ENCODE measurements at regions of chr4 and their contacts with region 1.

Region 1: GRCh38 chr4:118968005-118968404 is 79.4 kb downstream of the SYNPO2 start:
- DNase-seq: peak; percentile 75
- H3K4me3 ChIP-seq: peak overlapping the region; percentile 29; the same call in 1 of the 2 replicates
- H3K27ac ChIP-seq: peak overlapping the region; percentile 52
- H3K4me1 ChIP-seq: peaks cover 30% of the 10 kb centered on the region
- H3K27me3 ChIP-seq: no peaks in the 10 kb centered on the region

Region 2: GRCh38 chr4:117941611-117942010 is 1026.4 kb before region 1 on chr4:
- in situ Hi-C with region 1: no loop called
- DNase-seq: no peak
- H3K4me3 ChIP-seq: no peak overlapping the region
- H3K27ac ChIP-seq: no peak overlapping the region
- H3K4me1 ChIP-seq: no peaks in the 10 kb centered on the region
- H3K27me3 ChIP-seq: no peaks in the 10 kb centered on the region

Region 3: DNA sequence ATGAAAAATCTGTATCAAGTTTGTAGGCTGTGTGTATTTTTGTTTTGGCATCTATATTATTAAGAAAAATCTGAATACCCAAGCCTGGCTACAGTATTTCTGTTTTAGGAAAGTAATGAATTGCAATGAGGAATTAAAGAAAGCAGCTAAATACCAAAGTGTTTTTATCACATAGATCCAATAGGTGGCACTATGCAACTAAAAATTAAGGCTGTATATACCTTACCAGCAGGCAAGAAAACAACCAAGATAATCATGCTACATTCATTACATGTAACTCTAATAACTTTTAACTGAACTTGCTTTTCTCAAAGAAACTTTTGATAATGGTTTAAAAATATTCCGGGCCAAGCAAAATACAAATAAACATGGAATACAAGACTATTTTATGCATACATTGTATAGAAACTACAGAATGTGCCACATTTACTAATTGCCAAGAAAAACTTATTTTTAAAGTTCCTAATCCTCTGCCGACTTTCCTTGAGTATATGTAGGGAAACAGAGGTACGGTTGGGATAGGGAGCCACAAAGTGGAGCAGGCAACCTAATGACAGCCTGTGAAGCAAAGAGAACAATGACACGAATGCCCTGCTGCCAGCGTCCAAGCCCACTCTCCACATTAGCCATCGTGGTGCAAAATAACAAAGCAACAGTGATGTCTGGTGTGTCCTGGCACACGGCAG is 195.8 kb before region 1 on chr4:
- in situ Hi-C with region 1: loop called (anchors 25 kb)
- DNase-seq: peak; percentile 72
- H3K4me3 ChIP-seq: peak overlapping the region; percentile 17; the same call in 1 of the 2 replicates
- H3K27ac ChIP-seq: peak overlapping the region; percentile 56
- H3K4me1 ChIP-seq: peaks cover 51% of the 10 kb centered on the region
- H3K27me3 ChIP-seq: no peaks in the 10 kb centered on the region

Region 4: GRCh38 chr4:119299741-119300100 is 331.7 kb after region 1 on chr4:
- in situ Hi-C with region 1: no loop called
- DNase-seq: no peak
- H3K4me3 ChIP-seq: peak overlapping the region; percentile 82
- H3K27ac ChIP-seq: peak overlapping the region; percentile 83
- H3K4me1 ChIP-seq: peaks cover 15% of the 10 kb centered on the region; the same call in 1 of the 2 replicates
- H3K27me3 ChIP-seq: no peaks in the 10 kb centered on the region

Measured in GM23248 (cell line).